ENCODE measurements at regions of chr2 and their contacts with region 1.

Region 1: GRCh38 chr2:127701193-127701650 is at the start of gene SFT2D3:
- DNase-seq: peak; percentile 91
- H3K4me3 ChIP-seq: peak within 1 kb of the TSS; percentile 61 to 80 (median 63)
- H3K27ac ChIP-seq: peak within 1 kb of the TSS; percentile 96
- H3K4me1 ChIP-seq: peaks cover 0 to 4% (median 3%) of the 10 kb centered on the region in 4 experiments; a peak in 6 of 7 replicates
- H3K27me3 ChIP-seq: no peaks in the 10 kb centered on the region
- CTCF ChIP-seq: no peak
- EP300 ChIP-seq: no peak
- POLR2A ChIP-seq: peak; percentile 96 to 97
- RAD21 ChIP-seq: no peak; a peak in 1 of 4 replicates
- total RNA-seq, gene SFT2D3: 7.1 and 7.3 TPM in 2 replicates

Region 2: DNA sequence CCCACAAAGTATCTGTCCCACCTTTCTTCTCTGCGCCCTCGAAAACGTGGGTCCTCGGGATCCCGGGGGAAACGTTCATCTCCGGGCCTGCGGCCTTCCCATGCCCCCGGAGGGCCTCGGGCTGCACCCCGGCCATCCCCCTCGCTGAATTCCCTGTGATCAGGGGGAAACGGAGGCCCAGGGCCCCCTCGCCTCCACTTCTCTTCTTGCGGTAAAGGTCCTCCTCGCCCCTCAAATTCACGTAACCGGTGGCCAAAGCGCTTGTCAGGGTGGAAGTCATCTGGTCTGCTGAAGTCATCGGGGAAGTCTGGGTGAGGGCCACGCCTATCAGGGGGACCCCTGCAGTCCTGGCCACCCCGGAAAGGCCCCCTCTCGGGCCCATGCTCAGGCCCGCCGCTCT is 12.3 kb after region 1 on chr2:
- CTCF ChIA-PET with region 1: interaction called, 11 read pairs
- POLR2A ChIA-PET with region 1: interaction called, 25 read pairs
- DNase-seq: no peak
- H3K4me3 ChIP-seq: no peak overlapping the region
- H3K27ac ChIP-seq: no peak overlapping the region
- H3K4me1 ChIP-seq: no peaks in the 10 kb centered on the region
- H3K27me3 ChIP-seq: no peaks in the 10 kb centered on the region
- CTCF ChIP-seq: no peak
- EP300 ChIP-seq: no peak
- POLR2A ChIP-seq: no peak
- RAD21 ChIP-seq: no peak

Region 3: GRCh38 chr2:127770973-127771735 is 69.9 kb after region 1 on chr2:
- CTCF ChIA-PET with region 1: no interaction called
- POLR2A ChIA-PET with region 1: no interaction called
- DNase-seq: no peak
- H3K4me3 ChIP-seq: no peak overlapping the region
- H3K27ac ChIP-seq: no peak overlapping the region
- H3K4me1 ChIP-seq: peaks cover 0 to 5% (median 0%) of the 10 kb centered on the region in 4 experiments; a peak in 1 of 7 replicates
- H3K27me3 ChIP-seq: no peaks in the 10 kb centered on the region
- CTCF ChIP-seq: no peak
- EP300 ChIP-seq: no peak
- POLR2A ChIP-seq: no peak
- RAD21 ChIP-seq: no peak

Measured in H1 (cell line).